Gastrocnemius medialis (tissue), 4 donors: ENCODE measurements at regions of chr7 and their contacts with region 1.

Region 1: GRCh38 chr7:16773326-16773725 is 19.8 kb downstream of the TSPAN13 start:
- DNase-seq: no peak
- ATAC-seq: no peak
- H3K4me3 ChIP-seq: no peak overlapping the region
- H3K27ac ChIP-seq: no peak overlapping the region
- H3K4me1 ChIP-seq: no peaks in the 10 kb centered on the region
- H3K27me3 ChIP-seq: no peaks in the 10 kb centered on the region
- CTCF ChIP-seq: no peak
- POLR2A ChIP-seq: no peak

Region 2: GRCh38 chr7:16815001-16815400 is 41.7 kb after region 1 on chr7:
- in situ Hi-C with region 1: no loop called
- intact Hi-C with region 1: loop called (anchors 2 kb)
- DNase-seq: no peak
- ATAC-seq: no peak
- H3K4me3 ChIP-seq: no peak overlapping the region
- H3K27ac ChIP-seq: no peak overlapping the region
- H3K4me1 ChIP-seq: no peaks in the 10 kb centered on the region
- H3K27me3 ChIP-seq: no peaks in the 10 kb centered on the region
- CTCF ChIP-seq: no peak
- POLR2A ChIP-seq: no peak

Region 3: DNA sequence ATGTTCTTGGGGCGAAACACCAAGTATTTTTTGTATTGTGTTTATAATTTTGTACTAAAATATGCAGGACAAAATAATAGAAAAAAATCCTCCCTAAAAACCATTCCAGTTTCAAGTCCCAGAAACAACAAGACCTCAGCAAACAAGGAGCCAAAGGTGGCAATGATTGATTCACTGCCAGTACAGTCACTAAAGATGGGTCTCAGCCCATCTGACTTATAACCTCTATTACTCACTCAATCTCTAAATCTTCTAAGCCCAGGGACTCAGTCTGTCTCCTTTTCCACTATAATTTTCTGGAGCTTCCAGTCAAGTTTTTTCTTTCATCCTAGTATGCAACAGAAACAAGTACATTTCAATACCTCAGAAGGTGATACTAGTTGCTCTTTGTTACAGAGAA is 1133.7 kb after region 1 on chr7:
- in situ Hi-C with region 1: no loop called
- intact Hi-C with region 1: no loop called
- DNase-seq: no peak
- ATAC-seq: no peak
- H3K4me3 ChIP-seq: no peak overlapping the region
- H3K27ac ChIP-seq: no peak overlapping the region
- H3K4me1 ChIP-seq: peaks cover 0 to 9% of the 10 kb centered on the region in 2 donors
- H3K27me3 ChIP-seq: no peaks in the 10 kb centered on the region
- CTCF ChIP-seq: no peak
- POLR2A ChIP-seq: no peak